HEK293 (cell line): ENCODE measurements at regions of chr7 and their contacts with region 1.

Region 1: DNA sequence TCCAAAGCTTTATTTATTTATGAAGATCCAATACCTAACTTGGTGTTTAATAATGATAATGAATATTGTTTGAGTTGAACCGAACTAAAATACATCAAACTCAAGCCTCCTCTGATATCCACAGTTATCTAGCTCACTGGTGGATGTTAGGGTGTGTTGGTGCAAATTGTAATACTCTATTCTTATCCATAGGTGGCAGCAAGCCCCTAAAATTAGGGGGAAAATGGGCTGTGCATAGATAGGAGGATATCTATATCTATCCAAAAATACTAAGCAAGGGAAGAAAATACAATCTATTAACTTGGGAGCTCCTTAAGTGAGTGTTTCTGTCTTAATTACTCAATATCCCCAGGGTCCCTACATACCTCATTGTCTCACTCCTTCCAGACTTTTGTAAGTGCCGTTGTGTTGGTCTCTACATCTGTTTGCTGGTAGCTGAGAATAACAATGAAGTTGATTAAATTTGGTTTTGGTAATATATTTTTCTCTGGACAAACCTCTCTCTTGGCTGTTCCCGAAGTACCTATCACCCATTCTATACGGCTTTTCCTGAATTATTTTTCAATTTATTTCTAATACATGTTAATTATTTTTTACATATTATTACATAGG is 55.0 kb upstream of the VWDE start:
- H3K4me3 ChIP-seq: no peak overlapping the region
- H3K27ac ChIP-seq: no peak overlapping the region
- H3K4me1 ChIP-seq: 0 out of 2 replicates have a peak, but pooled peaks cover 3% of the 10 kb centered on the region
- CTCF ChIP-seq: 0 out of 2 replicates have a peak, but pooled peaks have one; percentile 36

Region 2: GRCh38 chr7:12436896-12437535 is 21.6 kb before region 1 on chr7:
- CTCF ChIA-PET with region 1: interaction called, 24 read pairs
- POLR2A ChIA-PET with region 1: no interaction called
- H3K4me3 ChIP-seq: no peak overlapping the region
- H3K27ac ChIP-seq: no peak overlapping the region
- H3K4me1 ChIP-seq: no peaks in the 10 kb centered on the region
- CTCF ChIP-seq: no peak

Region 3: GRCh38 chr7:12469568-12469967 is 10.9 kb after region 1 on chr7:
- CTCF ChIA-PET with region 1: interaction called, 35 read pairs
- POLR2A ChIA-PET with region 1: no interaction called
- H3K4me3 ChIP-seq: no peak overlapping the region
- H3K27ac ChIP-seq: no peak overlapping the region
- H3K4me1 ChIP-seq: no peaks in the 10 kb centered on the region
- CTCF ChIP-seq: no peak

Region 4: DNA sequence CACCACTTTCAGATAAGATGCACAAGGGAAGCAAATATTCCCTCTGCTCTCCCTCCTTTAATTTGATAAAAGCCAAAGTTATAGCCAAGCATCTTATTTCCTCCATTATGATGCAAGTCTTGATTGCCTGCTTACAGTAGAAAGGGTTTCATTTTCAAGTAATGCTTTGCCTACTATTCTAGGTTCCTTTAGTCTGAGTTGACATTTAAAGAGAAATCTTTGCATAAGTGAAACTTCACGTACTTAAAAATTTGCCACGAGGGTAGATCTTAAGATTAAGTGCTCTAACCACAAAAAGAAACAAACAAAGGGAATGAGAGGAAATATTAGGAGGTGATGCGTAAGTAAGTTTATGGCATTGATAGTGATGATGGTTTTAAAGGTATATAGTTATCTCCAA is 23.1 kb after region 1 on chr7:
- CTCF ChIA-PET with region 1: interaction called, 32 read pairs
- POLR2A ChIA-PET with region 1: no interaction called
- H3K4me3 ChIP-seq: no peak overlapping the region
- H3K27ac ChIP-seq: no peak overlapping the region
- H3K4me1 ChIP-seq: no peaks in the 10 kb centered on the region
- CTCF ChIP-seq: no peak

Region 5: GRCh38 chr7:12524794-12525386 is 66.3 kb after region 1 on chr7:
- CTCF ChIA-PET with region 1: interaction called, 13 read pairs
- POLR2A ChIA-PET with region 1: no interaction called
- H3K4me3 ChIP-seq: no peak overlapping the region
- H3K27ac ChIP-seq: no peak overlapping the region
- H3K4me1 ChIP-seq: no peaks in the 10 kb centered on the region
- CTCF ChIP-seq: no peak

Region 6: DNA sequence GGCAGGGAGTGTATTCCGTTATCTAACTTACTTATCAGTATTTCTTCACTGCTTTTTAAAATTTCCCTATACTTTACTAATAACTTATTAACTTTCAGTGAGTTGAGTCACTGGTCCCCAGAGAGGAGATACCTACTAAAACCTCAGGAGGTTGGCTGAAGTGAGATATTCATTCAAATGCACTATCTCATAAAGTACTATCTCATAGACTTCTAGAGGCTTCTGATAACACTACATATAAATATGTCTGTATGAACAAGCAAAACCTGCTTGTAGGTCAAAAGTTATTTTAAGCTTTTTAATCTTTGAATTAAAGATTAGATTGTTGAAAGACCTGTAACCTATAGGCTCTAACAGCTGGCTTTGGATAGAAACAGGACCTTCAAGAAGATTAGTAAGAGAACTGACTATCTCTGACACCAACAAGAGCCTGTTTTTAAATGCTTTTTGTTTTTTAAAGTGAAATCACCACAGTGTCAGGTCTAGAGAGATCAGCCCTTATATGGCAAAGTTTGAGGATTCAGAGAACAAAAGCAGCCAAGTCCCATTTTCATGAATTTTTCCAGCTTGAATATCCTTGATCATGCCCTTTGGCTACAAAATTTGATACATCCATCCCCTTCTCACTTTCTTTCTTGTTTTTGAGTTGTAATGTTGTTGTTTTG is 471.0 kb after region 1 on chr7:
- CTCF ChIA-PET with region 1: no interaction called
- POLR2A ChIA-PET with region 1: no interaction called
- H3K4me3 ChIP-seq: no peak overlapping the region
- H3K27ac ChIP-seq: no peak overlapping the region
- H3K4me1 ChIP-seq: peaks cover 2% of the 10 kb centered on the region; the same call in 1 of the 2 replicates
- CTCF ChIP-seq: no peak